Breast epithelium (tissue), 4 donors: ENCODE measurements at regions of chr18 and their contacts with region 1.

Region 1: GRCh38 chr18:51077217-51077616 is 47.2 kb downstream of the SMAD4 start:
- DNase-seq: no peak
- H3K4me3 ChIP-seq: no peak overlapping the region
- H3K27ac ChIP-seq: no peak overlapping the region
- H3K4me1 ChIP-seq: no peaks in the 10 kb centered on the region
- H3K27me3 ChIP-seq: no peaks in the 10 kb centered on the region
- CTCF ChIP-seq: no peak
- POLR2A ChIP-seq: no peak

Region 2: DNA sequence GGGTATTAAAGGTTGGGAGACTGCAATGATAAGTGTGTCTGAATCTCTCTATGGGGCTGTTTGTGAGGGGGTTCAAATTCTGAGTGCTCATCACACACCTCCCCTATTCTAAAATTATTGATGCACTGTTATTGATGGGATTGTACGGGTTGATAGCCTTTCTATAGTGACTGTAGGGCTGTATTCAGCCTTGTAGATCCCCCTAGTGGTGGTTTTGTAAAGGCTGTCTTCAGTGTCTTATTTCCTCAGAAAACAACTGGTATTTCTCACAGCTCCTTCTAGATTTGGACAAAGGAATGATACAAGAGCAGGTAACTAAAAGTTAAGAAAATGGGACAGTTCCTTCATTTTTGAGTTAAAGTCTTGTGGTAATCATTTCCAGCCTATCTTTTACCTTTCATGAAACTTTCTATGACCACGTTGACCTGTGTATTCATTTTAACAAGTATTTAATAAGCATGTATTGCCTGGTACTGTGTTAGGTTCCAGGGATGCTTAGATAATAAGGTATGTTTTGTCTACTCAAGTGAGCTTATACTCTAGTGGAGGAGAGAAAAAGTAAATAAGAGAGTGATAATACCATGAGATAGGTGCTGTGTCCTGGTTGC is 26.0 kb before region 1 on chr18:
- intact Hi-C with region 1: no loop called
- DNase-seq: no peak
- H3K4me3 ChIP-seq: no peak overlapping the region
- H3K27ac ChIP-seq: no peak overlapping the region
- H3K4me1 ChIP-seq: no peaks in the 10 kb centered on the region
- H3K27me3 ChIP-seq: no peaks in the 10 kb centered on the region
- CTCF ChIP-seq: peak; percentile 45 to 64 (median 59)
- POLR2A ChIP-seq: no peak

Region 3: GRCh38 chr18:51128533-51128932 is 51.3 kb after region 1 on chr18:
- intact Hi-C with region 1: no loop called
- DNase-seq: no peak
- H3K4me3 ChIP-seq: no peak overlapping the region
- H3K27ac ChIP-seq: no peak overlapping the region
- H3K4me1 ChIP-seq: no peaks in the 10 kb centered on the region
- H3K27me3 ChIP-seq: no peaks in the 10 kb centered on the region
- CTCF ChIP-seq: no peak
- POLR2A ChIP-seq: no peak

Region 4: DNA sequence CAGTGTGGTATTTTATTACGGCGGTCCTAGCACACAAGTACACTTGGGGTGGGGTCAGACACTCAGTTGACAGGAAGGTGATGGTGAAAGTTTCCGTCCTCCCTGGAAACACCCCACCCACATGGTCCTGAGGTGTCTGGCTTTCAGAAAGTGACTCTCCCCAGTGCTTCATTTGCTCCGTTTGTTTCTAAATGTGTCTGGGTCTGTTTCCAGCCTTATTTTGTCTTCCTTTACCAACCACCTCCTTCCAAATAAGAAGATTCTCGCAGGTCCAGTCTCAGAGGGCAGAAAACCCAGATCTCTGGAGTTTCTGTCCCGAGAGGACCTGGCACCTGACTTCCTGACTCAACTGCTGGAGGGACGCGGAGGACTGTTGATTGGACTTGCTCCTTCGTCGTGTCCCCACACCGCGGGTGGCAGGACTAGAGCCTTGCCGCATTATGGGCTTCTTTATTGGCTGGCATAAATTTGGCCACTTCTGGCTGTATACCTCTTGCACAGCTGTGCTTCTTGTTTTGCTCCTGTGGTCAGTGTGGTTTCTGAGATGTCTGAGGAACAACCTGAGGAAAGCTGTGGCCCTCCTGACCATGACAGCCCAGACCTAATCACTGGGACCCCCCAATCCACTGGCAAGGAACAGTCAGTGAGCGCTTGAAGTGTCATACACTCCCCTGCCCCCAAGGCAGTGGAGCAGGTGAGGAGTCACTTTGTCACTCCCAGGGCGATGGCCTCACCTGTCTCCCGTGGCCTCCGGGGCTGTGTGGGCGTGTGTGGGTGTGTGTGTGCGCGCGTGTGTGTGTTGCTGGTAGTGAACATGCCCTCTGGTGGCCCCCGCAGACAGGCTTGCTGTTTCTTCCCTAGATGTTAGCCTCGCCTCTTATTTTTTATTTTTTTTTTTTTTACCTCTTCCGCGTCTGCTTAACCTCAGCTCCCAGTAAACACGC is 74.6 kb after region 1 on chr18:
- intact Hi-C with region 1: loop called (anchors 2 kb)
- DNase-seq: no peak
- H3K4me3 ChIP-seq: no peak overlapping the region
- H3K27ac ChIP-seq: no peak overlapping the region
- H3K4me1 ChIP-seq: no peaks in the 10 kb centered on the region
- H3K27me3 ChIP-seq: no peaks in the 10 kb centered on the region
- CTCF ChIP-seq: no peak
- POLR2A ChIP-seq: no peak